Activated CD4-positive, alpha-beta T cell treated with anti-CD3 and anti-CD28 coated beads, Interleukin-2, amount 10 ng/mL, durations not matched to agents 24 days and 14 days (primary cell): ENCODE measurements at regions of chr16 and their contacts with region 1.

Region 1: GRCh38 chr16:30922960-30923535 is 324 bp upstream of the FBXL19 start:
- DNase-seq: peak; percentile 99
- H3K4me3 Mint-ChIP-seq: peak overlapping the region; percentile 100
- H3K27ac Mint-ChIP-seq: peak overlapping the region; percentile 100
- H3K4me1 Mint-ChIP-seq: peaks cover 29% of the 10 kb centered on the region
- H3K27me3 Mint-ChIP-seq: no peaks in the 10 kb centered on the region

Region 2: DNA sequence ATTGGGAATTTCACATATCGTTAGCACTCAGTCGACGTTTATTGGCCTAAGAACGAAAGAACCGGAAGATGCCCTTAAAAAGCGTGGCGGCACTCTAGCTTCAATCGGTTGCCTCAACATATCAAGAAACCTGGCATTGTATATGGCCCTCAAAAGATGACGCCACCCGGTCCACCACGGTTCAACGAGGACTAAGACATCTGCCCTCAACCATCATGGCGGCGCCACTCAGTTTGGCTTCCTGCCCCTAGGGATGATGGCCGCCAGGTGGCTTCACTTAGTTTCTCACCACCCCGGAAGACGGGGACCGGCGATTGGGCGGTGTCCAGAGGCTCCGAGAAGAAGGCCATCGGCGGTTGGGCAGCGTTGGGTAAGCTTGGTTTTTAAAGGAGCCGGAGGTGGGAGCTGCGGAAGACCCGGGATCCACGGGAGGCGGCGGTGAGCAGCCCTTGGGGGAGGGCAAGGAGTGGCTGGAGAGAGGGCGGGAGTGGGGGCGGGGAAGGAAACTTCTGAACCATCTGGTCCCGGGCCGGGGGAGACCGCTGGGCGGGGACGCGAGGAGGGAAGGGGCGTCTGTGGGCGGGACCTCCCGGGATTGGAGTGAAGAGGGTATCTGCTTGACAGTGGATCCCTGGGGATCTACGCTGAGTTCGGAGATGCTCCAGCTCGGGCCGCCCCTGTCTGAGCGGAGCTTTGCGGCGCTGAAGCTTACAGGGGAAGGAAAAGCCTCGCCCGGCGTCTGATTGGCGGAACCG is 272.5 kb before region 1 on chr16 and contains the start of gene PRR14:
- intact Hi-C with region 1: loop called (anchors 2 kb)
- DNase-seq: peak; percentile 99
- H3K4me3 Mint-ChIP-seq: peak within 1 kb of the TSS; percentile 95
- H3K27ac Mint-ChIP-seq: peak within 1 kb of the TSS; percentile 92
- H3K4me1 Mint-ChIP-seq: peaks cover 28% of the 10 kb centered on the region
- H3K27me3 Mint-ChIP-seq: peaks cover 2% of the 10 kb centered on the region
- total RNA-seq, gene PRR14: 82.2 and 86.7 TPM in 2 replicates

Region 3: GRCh38 chr16:30761928-30762810 is 160.9 kb before region 1 on chr16 and contains the starts of genes CFAP119 and RNF40:
- intact Hi-C with region 1: loop called (anchors 1 kb)
- DNase-seq: peak; percentile 99
- H3K4me3 Mint-ChIP-seq: peak within 1 kb of the TSS; percentile 97
- H3K27ac Mint-ChIP-seq: peak within 1 kb of the TSS; percentile 83
- H3K4me1 Mint-ChIP-seq: peaks cover 22% of the 10 kb centered on the region
- H3K27me3 Mint-ChIP-seq: no peaks in the 10 kb centered on the region
- total RNA-seq, gene CFAP119: 4.0 and 4.2 TPM in 2 replicates
- total RNA-seq, gene RNF40: 95.4 and 100 TPM in 2 replicates

Region 4: DNA sequence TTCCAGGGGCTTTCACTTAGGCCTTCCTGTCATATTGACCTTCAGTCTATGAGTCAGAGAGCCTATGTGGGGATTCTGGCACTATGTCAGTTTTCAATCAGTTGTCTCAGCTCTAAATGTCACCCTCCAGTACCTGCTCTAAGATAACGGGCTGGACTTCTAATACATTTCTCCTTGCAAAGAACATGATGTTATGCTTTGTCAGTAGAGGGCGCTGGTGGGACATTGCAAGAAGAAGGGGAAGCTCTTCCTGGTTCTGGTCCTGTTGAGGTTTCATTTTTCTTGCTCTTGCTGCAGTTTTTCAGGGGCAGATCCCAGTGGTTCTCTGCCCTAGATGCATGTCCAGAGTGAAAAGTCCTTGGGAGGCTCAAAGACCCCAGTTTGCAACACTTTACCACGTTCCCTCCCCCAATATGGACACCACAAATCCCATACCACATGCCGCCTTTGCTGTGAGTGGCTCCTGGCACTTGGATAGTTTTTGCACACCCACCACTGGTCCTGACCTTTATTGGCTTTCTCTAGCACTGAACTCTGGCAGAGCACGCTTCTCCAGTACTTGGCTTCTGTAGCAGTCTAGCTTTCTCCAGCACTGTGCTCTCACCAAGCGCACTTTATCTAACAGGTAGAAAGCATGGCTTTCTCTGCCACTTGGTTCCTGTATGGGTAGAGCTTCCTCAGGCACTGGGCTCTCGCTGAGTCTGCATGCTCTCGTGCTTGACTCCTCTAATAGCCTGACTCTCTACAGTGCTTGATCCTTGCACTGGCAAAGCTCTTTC is 78.2 kb before region 1 on chr16:
- intact Hi-C with region 1: loop called (anchors 1 kb)
- DNase-seq: peak; percentile 95
- H3K4me3 Mint-ChIP-seq: peak overlapping the region; percentile 6
- H3K27ac Mint-ChIP-seq: peak overlapping the region; percentile 62
- H3K4me1 Mint-ChIP-seq: peaks cover 9% of the 10 kb centered on the region
- H3K27me3 Mint-ChIP-seq: no peaks in the 10 kb centered on the region

Region 5: GRCh38 chr16:30941600-30942425 is 18.8 kb after region 1 on chr16:
- intact Hi-C with region 1: loop called (anchors 1 kb)
- DNase-seq: peak; percentile 92
- H3K4me3 Mint-ChIP-seq: peak overlapping the region; percentile 63
- H3K27ac Mint-ChIP-seq: peak overlapping the region; percentile 75
- H3K4me1 Mint-ChIP-seq: peaks cover 27% of the 10 kb centered on the region
- H3K27me3 Mint-ChIP-seq: no peaks in the 10 kb centered on the region

Region 6: DNA sequence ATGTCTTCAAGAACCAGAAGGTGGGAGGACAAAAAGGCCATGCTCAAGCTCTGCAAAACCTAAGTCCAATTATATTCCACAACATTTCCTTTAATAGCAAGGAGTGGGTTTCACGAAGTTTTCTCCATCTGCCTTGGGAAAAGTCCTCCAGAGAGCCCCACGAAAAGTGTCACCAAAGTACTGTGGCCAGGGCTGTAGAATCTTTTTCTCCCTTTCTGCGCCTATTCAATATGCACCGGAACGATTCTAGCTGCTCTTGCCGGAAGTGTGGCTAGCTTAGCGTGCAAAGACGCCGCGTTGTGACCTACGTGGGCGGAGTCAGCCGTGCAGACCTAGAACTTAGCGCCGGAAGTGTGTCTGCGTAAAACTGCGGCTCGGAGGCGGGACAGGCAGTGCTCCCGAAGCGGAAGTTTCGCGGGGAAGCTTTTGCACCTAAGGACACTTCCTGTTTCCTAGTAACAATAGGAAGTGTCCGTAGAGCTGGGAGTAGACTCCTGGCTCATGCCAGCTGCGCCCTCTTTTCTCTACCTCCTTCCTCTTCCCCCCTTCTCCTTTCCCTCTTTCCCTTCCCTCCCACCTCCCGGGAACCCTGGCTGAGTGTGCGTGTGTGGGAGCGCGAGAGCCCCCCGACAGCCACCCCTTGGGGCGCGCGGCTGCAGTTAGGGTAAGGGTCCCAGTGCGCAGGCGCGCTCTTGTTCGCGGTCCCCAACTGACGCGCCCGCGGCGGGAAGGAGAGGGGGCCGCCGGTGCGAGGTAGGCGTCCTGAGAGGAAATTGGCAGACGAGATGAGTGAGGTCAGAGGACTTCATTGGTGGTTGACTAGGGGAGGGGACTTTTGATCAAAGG is 151.1 kb after region 1 on chr16 and contains the starts of genes ZNF646 and ZNF668:
- intact Hi-C with region 1: loop called (anchors 1 kb)
- DNase-seq: peak; percentile 99
- H3K4me3 Mint-ChIP-seq: peak within 1 kb of the TSS; percentile 90
- H3K27ac Mint-ChIP-seq: peak within 1 kb of the TSS; percentile 93
- H3K4me1 Mint-ChIP-seq: peaks cover 31% of the 10 kb centered on the region
- H3K27me3 Mint-ChIP-seq: no peaks in the 10 kb centered on the region
- total RNA-seq, gene ZNF646: 21.1 and 23.3 TPM in 2 replicates
- total RNA-seq, gene ZNF668: 15.6 and 15.9 TPM in 2 replicates

Region 7: GRCh38 chr16:31142109-31143010 is 219.3 kb after region 1 on chr16:
- intact Hi-C with region 1: loop called (anchors 1 kb)
- DNase-seq: peak; percentile 99
- H3K4me3 Mint-ChIP-seq: peak overlapping the region; percentile 69
- H3K27ac Mint-ChIP-seq: peak overlapping the region; percentile 82
- H3K4me1 Mint-ChIP-seq: peaks cover 8% of the 10 kb centered on the region
- H3K27me3 Mint-ChIP-seq: no peaks in the 10 kb centered on the region